Activated CD4-positive, alpha-beta memory T cell treated with anti-CD3 and anti-CD28 coated beads for 36 hours (primary cell): ENCODE measurements at regions of chr4 and their contacts with region 1.

Region 1: DNA sequence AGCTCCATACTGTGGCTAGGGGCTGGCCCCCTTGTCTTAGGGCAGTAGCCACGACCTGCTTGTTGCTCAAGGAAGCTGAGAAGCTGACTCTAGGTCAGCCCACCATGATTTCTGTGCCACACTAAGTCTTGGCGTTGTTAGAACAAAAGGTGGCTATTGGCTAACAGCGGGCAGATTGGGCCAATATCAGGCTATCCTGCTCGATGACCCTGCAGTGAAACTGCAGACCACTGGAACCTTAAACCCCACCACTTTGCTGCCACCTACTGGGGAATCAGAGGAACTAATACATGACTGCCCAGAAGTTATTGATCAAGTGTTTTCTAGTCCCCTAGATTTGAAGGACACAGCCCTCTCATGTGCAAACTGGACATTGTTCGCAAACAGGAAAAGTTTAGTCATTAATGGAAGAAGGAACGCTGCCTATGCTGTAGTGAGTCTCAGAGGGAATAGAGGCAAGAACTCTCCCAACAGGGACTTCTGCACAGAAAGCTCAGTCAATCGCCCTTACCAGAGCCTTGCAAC is 17.0 kb upstream of the PAPSS1 start:
- DNase-seq: peak; percentile 40
- H3K4me3 Mint-ChIP-seq: no peak overlapping the region
- H3K27ac Mint-ChIP-seq: no peak overlapping the region
- H3K4me1 Mint-ChIP-seq: no peaks in the 10 kb centered on the region
- H3K27me3 Mint-ChIP-seq: no peaks in the 10 kb centered on the region

Region 2: DNA sequence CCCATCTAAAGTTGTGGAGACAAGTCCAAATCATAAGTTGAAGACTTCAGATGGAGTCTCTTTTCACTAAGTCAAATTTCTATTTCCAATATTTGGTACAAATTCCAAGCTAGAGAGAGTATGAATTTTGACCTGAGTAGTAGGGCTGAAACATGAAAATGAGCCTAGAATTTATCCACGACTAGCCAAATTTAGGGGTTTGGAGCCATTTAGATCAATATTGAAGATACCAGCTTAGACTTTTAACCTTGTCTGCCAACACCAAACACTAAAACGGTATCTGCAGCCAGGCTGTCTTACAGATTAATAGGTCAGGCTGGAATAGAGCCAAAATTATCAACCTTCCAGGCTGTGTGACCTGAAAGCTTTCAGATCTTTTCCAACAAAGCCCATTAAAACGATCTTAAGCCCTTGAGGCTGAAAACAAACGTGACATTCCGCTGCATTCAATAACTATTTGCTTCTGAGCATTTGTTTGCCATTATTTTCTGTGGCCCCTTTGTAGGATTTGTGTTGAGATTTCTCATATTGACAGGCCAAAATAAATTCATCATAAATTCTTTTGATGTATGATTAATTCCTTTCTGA is 432.2 kb before region 1 on chr4:
- CTCF ChIA-PET with region 1: no interaction called
- POLR2A ChIA-PET with region 1: no interaction called
- intact Hi-C with region 1: no loop called
- DNase-seq: no peak
- H3K4me3 Mint-ChIP-seq: no peak overlapping the region
- H3K27ac Mint-ChIP-seq: no peak overlapping the region
- H3K4me1 Mint-ChIP-seq: no peaks in the 10 kb centered on the region
- H3K27me3 Mint-ChIP-seq: no peaks in the 10 kb centered on the region

Region 3: GRCh38 chr4:107552306-107552705 is 184.7 kb before region 1 on chr4:
- CTCF ChIA-PET with region 1: interaction called, 3 read pairs
- POLR2A ChIA-PET with region 1: no interaction called
- intact Hi-C with region 1: loop called (anchors 5 kb)
- DNase-seq: no peak
- H3K4me3 Mint-ChIP-seq: no peak overlapping the region
- H3K27ac Mint-ChIP-seq: no peak overlapping the region
- H3K4me1 Mint-ChIP-seq: no peaks in the 10 kb centered on the region
- H3K27me3 Mint-ChIP-seq: no peaks in the 10 kb centered on the region

Region 4: GRCh38 chr4:107747748-107748486 is 10.9 kb after region 1 on chr4:
- CTCF ChIA-PET with region 1: interaction called, 25 read pairs
- POLR2A ChIA-PET with region 1: no interaction called
- intact Hi-C with region 1: no loop called
- DNase-seq: no peak
- H3K4me3 Mint-ChIP-seq: no peak overlapping the region
- H3K27ac Mint-ChIP-seq: no peak overlapping the region
- H3K4me1 Mint-ChIP-seq: peaks cover 4% of the 10 kb centered on the region
- H3K27me3 Mint-ChIP-seq: peaks cover 21% of the 10 kb centered on the region

Region 5: DNA sequence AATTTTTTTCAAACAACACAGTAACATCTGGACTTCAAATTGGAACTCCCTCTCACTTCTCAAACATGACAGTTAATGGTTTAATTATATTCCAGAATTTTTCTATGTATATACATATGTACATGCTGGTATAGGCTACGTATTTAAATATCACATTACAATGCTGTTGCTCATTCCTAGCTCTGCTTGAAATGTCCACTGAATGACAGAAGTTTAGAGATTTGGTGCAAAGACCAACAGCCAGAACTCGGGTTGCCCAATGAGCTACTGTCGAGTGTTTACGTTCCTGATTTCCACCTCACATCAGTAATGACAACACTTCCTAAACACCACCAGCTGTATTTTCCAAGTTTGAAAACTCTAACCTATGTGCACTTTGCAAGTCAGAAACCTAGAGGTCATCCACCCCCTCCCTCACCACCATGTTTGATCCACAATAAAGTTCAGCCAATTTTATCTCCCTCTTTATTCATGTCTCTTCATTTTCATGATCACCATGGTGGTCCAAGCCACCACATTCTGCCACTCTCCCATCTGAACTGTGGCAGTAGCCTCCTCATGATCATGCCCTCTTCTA is 834.1 kb after region 1 on chr4:
- CTCF ChIA-PET with region 1: no interaction called
- POLR2A ChIA-PET with region 1: no interaction called
- intact Hi-C with region 1: no loop called
- DNase-seq: no peak
- H3K4me3 Mint-ChIP-seq: no peak overlapping the region
- H3K27ac Mint-ChIP-seq: no peak overlapping the region
- H3K4me1 Mint-ChIP-seq: peaks cover 7% of the 10 kb centered on the region
- H3K27me3 Mint-ChIP-seq: no peaks in the 10 kb centered on the region